CD4-positive, alpha-beta T cell (primary cell): ENCODE measurements at regions of chr1 and their contacts with region 1.

Region 1: GRCh38 chr1:108643492-108644335 is 17.2 kb downstream of the HENMT1 start:
- DNase-seq: peak in 10 of 14 experiments; percentile 32 to 86 (median 48)
- ATAC-seq: peak; percentile 24
- H3K4me3 ChIP-seq: no peak overlapping the region
- H3K4me3 Mint-ChIP-seq: peak overlapping the region; percentile 25
- H3K27ac ChIP-seq: peak overlapping the region; percentile 18 to 74
- H3K27ac Mint-ChIP-seq: peak overlapping the region; percentile 96
- H3K4me1 ChIP-seq: peaks cover 61% of the 10 kb centered on the region
- H3K4me1 Mint-ChIP-seq: peaks cover 80% of the 10 kb centered on the region
- H3K27me3 ChIP-seq: no peaks in the 10 kb centered on the region
- H3K27me3 Mint-ChIP-seq: no peaks in the 10 kb centered on the region
- CTCF ChIP-seq: peak; percentile 77

Region 2: DNA sequence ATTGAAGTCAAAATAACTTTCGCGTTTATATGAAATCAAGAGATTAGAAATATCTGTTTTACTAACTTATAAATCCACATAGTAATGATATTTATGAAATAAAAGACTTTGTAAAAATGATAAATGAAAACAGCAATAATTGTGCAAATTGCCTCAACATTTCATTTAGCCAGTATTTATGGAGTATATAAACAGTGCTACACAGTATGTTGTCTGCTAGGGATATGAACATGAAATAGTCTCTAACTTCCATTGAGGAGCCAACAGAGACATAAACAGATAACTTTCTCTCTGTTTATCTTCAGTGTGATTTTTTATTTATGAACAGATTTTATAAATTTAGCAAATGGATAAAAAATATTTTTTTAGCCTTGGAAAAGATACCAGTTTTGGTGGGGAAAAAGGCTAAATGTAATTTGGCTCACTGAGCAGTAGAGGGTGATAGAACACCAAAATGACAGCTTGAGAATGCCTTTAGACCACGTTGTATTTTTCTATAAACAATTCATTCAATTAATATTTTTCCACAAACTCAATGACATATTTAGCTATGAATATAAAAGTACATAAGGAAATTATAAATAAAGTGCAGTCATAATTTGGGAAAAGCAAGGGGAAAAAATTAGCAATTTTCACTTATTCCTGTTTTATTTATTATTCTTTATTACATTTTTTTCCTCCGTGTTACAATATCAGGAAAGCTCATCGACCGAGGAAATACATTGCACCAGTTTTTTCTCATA is 131.3 kb before region 1 on chr1:
- CTCF ChIA-PET with region 1: interaction called, 31 read pairs
- POLR2A ChIA-PET with region 1: interaction called, 9 read pairs
- intact Hi-C with region 1: loop called (anchors 1 kb)
- DNase-seq: peak in 4 of 14 experiments; percentile 6 to 75 (median 69)
- ATAC-seq: peak; percentile 77
- H3K4me3 ChIP-seq: no peak overlapping the region
- H3K4me3 Mint-ChIP-seq: no peak overlapping the region
- H3K27ac ChIP-seq: no peak overlapping the region
- H3K27ac Mint-ChIP-seq: no peak overlapping the region
- H3K4me1 ChIP-seq: no peaks in the 10 kb centered on the region
- H3K4me1 Mint-ChIP-seq: no peaks in the 10 kb centered on the region
- H3K27me3 ChIP-seq: peaks cover 0 to 10% of the 10 kb centered on the region in 2 experiments
- H3K27me3 Mint-ChIP-seq: peaks cover 13% of the 10 kb centered on the region
- CTCF ChIP-seq: peak; percentile 99

Region 3: GRCh38 chr1:108624055-108624454 is 19.7 kb before region 1 on chr1:
- CTCF ChIA-PET with region 1: interaction called, 21 read pairs
- POLR2A ChIA-PET with region 1: no interaction called
- intact Hi-C with region 1: no loop called
- DNase-seq: no peak
- ATAC-seq: no peak
- H3K4me3 ChIP-seq: no peak overlapping the region
- H3K4me3 Mint-ChIP-seq: no peak overlapping the region
- H3K27ac ChIP-seq: no peak overlapping the region
- H3K27ac Mint-ChIP-seq: no peak overlapping the region
- H3K4me1 ChIP-seq: no peaks in the 10 kb centered on the region
- H3K4me1 Mint-ChIP-seq: no peaks in the 10 kb centered on the region
- H3K27me3 ChIP-seq: no peaks in the 10 kb centered on the region
- H3K27me3 Mint-ChIP-seq: no peaks in the 10 kb centered on the region
- CTCF ChIP-seq: no peak

Region 4: GRCh38 chr1:108708691-108709660 is 65.3 kb after region 1 on chr1:
- CTCF ChIA-PET with region 1: interaction called, 3 read pairs
- POLR2A ChIA-PET with region 1: interaction called, 12 read pairs
- intact Hi-C with region 1: no loop called
- DNase-seq: peak; percentile 41 to 83 (median 61)
- ATAC-seq: peak; percentile 79
- H3K4me3 ChIP-seq: no peak overlapping the region
- H3K4me3 Mint-ChIP-seq: no peak overlapping the region
- H3K27ac ChIP-seq: no peak overlapping the region
- H3K27ac Mint-ChIP-seq: no peak overlapping the region
- H3K4me1 ChIP-seq: peaks cover 28% of the 10 kb centered on the region
- H3K4me1 Mint-ChIP-seq: peaks cover 29% of the 10 kb centered on the region
- H3K27me3 ChIP-seq: no peaks in the 10 kb centered on the region
- H3K27me3 Mint-ChIP-seq: no peaks in the 10 kb centered on the region
- CTCF ChIP-seq: peak; percentile 49